ENCODE measurements at regions of chr2 and their contacts with region 1.

Region 1: DNA sequence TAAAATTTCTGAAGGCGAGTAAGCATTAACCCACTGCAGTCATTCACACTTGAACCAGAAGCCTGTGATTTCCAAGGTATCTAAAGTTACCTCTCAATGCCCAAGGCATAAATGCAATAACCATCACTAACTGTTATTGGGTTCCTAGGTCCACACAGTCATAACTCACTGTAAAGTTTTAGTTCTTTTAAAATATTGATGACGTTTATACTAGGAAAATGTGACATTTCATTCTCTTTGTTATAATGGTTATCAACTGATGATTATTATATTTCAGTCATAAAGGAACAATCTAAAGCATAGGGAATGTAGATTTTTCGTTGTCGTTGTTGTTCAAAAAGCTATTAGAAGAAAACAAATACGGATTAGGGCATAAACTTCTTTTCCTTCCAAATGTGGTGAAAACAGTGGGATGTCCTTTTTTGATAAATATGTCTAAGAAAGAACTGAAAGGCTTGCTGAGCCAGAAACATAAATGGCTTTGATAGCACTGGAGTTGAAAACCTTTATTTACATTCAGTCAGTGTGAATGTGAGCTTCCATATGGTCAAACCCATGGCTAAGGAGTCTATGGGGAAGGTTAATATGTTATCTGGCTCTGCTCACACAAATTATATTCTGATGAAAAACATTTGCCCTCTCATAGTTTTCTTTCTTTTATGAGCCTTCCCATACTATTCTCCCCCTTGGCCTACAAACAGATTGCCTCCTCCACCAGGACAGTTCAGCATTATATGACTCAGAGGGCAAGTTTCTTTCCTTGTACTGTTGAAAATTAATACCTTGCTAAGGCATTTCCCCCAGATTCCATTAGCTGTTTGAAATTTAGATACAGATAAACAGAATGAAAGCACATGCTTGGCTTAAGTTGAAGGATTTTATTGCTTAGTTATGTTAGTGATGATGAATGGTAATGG is 544.4 kb downstream of the LRRTM4 start:
- DNase-seq: no peak
- H3K4me3 ChIP-seq: no peak overlapping the region
- H3K27ac ChIP-seq: no peak overlapping the region
- H3K4me1 ChIP-seq: no peaks in the 10 kb centered on the region
- H3K27me3 ChIP-seq: no peaks in the 10 kb centered on the region
- CTCF ChIP-seq: no peak

Region 2: DNA sequence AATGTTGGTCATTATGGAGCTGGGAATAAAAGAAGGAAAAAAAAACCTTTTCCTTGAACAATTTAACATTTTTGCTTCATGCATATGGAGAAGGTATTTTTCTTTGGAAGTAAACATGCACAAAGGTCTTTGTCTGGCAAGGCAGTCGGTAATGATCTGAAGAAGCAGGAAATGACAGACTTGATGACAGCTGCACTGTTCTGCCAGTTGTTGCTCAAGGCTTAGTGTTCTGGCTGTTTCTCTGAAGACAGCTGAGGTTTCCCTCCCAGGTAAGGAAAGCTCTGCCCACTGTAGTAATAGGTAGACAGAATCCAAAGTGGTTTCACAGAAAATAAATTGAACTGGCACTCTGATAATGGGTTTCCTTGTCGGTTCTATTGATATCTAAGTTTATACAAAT is 958.6 kb before region 1 on chr2:
- intact Hi-C with region 1: loop called (anchors 5 kb)
- DNase-seq: no peak
- H3K4me3 ChIP-seq: no peak overlapping the region
- H3K27ac ChIP-seq: no peak overlapping the region
- H3K4me1 ChIP-seq: no peaks in the 10 kb centered on the region
- H3K27me3 ChIP-seq: no peaks in the 10 kb centered on the region
- CTCF ChIP-seq: no peak

Region 3: GRCh38 chr2:77121518-77121917 is 143.8 kb after region 1 on chr2:
- intact Hi-C with region 1: no loop called
- DNase-seq: no peak
- H3K4me3 ChIP-seq: no peak overlapping the region
- H3K27ac ChIP-seq: no peak overlapping the region
- H3K4me1 ChIP-seq: no peaks in the 10 kb centered on the region
- H3K27me3 ChIP-seq: no peaks in the 10 kb centered on the region
- CTCF ChIP-seq: no peak

Measured in tibial artery (tissue), 4 donors.